Activated T-helper 2 cell treated with anti-CD3 and anti-CD28 coated beads, Interferon-gamma antibody, Interleukin-2, Interleukin-4, amounts not matched to agents 10 μg/mL and 5 μg/mL and 100 μg/mL, durations not matched to agents 14 hours and 24 hours and 36 hours (primary cell): ENCODE measurements at regions of chr17 and their contacts with region 1.

Region 1: GRCh38 chr17:32319548-32319905 is 22.4 kb downstream of the C17orf75 start:
- DNase-seq: peak; percentile 67
- H3K4me3 Mint-ChIP-seq: peak overlapping the region; percentile 77
- H3K27ac Mint-ChIP-seq: no peak overlapping the region
- H3K4me1 Mint-ChIP-seq: peaks cover 26% of the 10 kb centered on the region
- H3K27me3 Mint-ChIP-seq: peaks cover 11% of the 10 kb centered on the region

Region 2: GRCh38 chr17:32253117-32253611 is 66.4 kb before region 1 on chr17:
- intact Hi-C with region 1: loop called (anchors 1 kb)
- DNase-seq: peak; percentile 66
- H3K4me3 Mint-ChIP-seq: no peak overlapping the region
- H3K27ac Mint-ChIP-seq: no peak overlapping the region
- H3K4me1 Mint-ChIP-seq: peaks cover 4% of the 10 kb centered on the region
- H3K27me3 Mint-ChIP-seq: peaks cover 43% of the 10 kb centered on the region

Region 3: DNA sequence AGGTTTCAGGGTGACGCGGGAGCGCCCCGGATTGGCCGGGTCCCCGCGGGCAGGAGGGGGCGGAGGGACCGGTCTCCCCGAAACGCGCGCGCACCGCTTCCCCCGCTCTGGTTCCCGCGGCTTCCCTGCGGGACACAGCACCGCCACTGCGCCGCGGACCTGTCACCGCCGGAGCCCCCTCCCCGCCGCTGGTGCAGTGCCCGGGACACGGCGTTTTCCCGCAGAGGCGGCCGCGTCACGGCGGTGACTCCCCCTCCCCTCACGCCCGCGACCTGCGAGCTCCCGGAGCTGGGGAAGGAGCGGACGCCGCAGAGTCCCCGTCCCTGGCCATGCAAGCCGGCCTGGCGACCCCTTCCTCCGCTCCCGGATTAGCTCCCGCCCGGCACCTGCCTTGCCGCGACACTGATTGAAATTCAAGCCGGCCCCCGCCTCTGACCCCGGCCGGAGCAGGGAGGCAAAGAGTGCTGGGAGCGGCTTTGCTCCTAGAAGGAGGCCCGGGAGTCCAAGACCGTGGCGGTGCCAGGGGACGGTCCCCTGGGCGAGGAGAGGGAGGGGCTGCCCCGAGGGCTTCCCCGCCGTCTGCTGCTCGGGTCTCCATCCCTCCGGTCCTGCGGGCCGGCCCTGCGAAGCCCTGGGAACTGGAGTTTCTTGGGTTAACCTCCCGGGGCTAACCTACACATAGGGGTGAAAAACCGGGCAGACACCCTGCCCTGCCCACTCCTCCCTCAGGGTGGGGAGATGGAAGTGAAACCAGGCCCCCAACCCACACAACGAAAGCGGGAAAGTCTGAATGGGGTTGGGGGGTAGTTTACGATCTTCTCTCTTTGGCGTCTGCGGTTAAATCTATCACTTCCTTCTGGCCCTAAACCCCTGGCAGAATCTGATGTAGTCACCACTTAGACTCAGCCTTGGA is 52.9 kb before region 1 on chr17:
- intact Hi-C with region 1: loop called (anchors 2 kb)
- DNase-seq: no peak
- H3K4me3 Mint-ChIP-seq: peak overlapping the region; percentile 73
- H3K27ac Mint-ChIP-seq: no peak overlapping the region
- H3K4me1 Mint-ChIP-seq: peaks cover 16% of the 10 kb centered on the region
- H3K27me3 Mint-ChIP-seq: peaks cover 77% of the 10 kb centered on the region

Region 4: DNA sequence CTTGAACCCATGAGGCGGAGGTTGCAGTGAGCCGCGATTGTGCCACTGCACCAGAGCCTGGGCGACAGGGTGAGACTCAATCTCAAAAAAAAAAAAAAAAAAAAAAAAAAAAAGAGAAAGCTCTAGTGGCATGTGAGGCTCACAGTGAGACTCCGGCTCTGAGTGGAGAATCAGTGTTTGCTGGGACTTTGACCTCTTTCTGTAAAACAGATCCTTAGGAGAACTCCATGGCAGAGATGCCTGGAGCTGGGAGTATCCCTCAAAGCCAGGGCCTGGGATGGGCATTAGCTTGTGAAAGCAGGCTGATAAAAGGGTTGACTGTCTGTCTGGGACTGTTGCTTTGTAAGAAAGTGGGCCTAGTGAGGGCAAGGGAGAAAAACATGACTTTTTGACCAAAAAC is 76.8 kb after region 1 on chr17:
- intact Hi-C with region 1: no loop called
- DNase-seq: no peak
- H3K4me3 Mint-ChIP-seq: no peak overlapping the region
- H3K27ac Mint-ChIP-seq: no peak overlapping the region
- H3K4me1 Mint-ChIP-seq: no peaks in the 10 kb centered on the region
- H3K27me3 Mint-ChIP-seq: no peaks in the 10 kb centered on the region